Endothelial cell of umbilical vein (primary cell): ENCODE measurements at regions of chr21 and their contacts with region 1.

Region 1: DNA sequence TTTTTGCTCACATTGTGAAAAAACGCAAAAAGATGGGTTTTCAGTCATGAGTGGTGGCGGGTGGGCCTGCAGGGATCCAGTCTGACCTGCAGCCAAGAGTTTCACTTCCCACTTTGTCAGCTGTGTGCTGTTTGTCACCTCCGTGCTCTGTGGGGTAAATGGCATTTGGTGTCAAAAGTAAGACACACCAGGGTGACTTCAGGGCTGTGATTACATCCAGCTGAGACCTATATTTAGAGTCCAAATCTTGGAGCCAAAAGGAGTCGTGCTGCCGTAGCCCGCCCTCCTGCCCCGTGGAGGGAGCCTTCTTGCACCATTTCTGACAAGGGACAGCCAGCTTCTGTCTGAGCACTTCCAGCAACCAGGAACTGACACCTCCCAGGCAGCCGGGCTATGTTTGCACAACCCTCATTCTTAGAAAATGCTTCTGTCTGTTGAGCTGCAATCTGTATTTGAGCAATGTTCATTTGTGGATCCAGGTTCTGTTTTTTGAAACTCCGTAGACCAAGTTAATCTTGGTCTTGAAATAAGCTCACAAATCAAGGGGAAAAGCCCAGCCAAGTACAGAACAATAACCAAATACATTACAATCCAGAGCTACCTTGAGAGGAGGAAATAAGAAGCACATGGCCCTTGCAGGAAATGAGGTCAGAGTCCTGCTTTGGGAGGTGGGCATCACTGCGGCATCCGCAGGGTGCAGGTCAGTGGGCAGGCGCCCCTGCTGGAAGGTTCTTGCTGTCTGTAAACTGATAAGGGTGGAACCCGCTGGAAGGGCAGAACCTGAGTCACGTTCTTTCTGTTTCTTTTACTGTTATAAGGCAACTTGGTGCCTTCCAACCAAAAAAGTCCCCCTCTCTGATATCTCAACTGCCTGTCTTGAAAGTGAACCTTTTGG is 14.4 kb downstream of the ABCG1 start:
- DNase-seq: peak; percentile 86
- H3K4me3 ChIP-seq: no peak overlapping the region
- H3K27ac ChIP-seq: peak overlapping the region; percentile 74
- H3K4me1 ChIP-seq: peaks cover 32% of the 10 kb centered on the region
- H3K27me3 ChIP-seq: peaks cover 0 to 5% of the 10 kb centered on the region in 2 experiments
- CTCF ChIP-seq: peak; percentile 37 to 39
- POLR2A ChIP-seq: no peak

Region 2: GRCh38 chr21:42156690-42157577 is 76.4 kb before region 1 on chr21:
- CTCF ChIA-PET with region 1: no interaction called
- POLR2A ChIA-PET with region 1: no interaction called
- dilution Hi-C with region 1: no loop called
- intact Hi-C with region 1: no loop called
- DNase-seq: peak; percentile 38
- H3K4me3 ChIP-seq: no peak overlapping the region
- H3K27ac ChIP-seq: no peak overlapping the region
- H3K4me1 ChIP-seq: no peaks in the 10 kb centered on the region
- H3K27me3 ChIP-seq: peaks cover 2% of the 10 kb centered on the region in 2 experiments
- CTCF ChIP-seq: no peak
- POLR2A ChIP-seq: no peak

Region 3: DNA sequence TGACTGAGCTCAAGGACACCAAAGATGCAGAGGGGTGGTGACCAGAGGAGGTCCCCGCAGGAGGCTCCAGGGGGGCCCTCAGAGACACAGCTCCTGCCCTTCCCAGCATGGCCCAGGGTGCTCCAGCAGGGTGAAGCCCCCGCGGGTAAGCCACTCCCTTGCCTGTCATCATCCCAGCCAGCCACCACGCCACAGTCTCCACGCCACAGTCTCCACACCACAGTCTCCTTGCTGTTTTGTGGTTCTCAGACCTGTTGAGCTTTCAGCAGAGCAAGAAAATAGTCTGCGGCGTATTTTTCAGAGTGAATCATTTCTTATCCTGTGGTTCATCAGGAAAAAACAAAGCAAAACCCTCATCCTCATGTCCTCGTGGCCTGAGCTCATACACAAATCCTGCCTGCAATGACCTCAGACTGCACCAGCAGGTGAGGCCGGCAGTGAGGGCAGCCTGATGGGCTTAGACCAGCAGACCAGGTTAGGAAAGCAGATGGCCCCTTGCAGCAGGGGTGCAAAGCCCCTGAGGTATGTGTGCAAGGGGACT is 40.1 kb before region 1 on chr21:
- CTCF ChIA-PET with region 1: interaction called, 3 read pairs
- POLR2A ChIA-PET with region 1: no interaction called
- dilution Hi-C with region 1: no loop called
- intact Hi-C with region 1: loop called (anchors 1 kb)
- DNase-seq: peak; percentile 27
- H3K4me3 ChIP-seq: no peak overlapping the region
- H3K27ac ChIP-seq: no peak overlapping the region
- H3K4me1 ChIP-seq: peaks cover 8% of the 10 kb centered on the region
- H3K27me3 ChIP-seq: peaks cover 0 to 5% of the 10 kb centered on the region in 2 experiments
- CTCF ChIP-seq: no peak
- POLR2A ChIP-seq: no peak

Region 4: DNA sequence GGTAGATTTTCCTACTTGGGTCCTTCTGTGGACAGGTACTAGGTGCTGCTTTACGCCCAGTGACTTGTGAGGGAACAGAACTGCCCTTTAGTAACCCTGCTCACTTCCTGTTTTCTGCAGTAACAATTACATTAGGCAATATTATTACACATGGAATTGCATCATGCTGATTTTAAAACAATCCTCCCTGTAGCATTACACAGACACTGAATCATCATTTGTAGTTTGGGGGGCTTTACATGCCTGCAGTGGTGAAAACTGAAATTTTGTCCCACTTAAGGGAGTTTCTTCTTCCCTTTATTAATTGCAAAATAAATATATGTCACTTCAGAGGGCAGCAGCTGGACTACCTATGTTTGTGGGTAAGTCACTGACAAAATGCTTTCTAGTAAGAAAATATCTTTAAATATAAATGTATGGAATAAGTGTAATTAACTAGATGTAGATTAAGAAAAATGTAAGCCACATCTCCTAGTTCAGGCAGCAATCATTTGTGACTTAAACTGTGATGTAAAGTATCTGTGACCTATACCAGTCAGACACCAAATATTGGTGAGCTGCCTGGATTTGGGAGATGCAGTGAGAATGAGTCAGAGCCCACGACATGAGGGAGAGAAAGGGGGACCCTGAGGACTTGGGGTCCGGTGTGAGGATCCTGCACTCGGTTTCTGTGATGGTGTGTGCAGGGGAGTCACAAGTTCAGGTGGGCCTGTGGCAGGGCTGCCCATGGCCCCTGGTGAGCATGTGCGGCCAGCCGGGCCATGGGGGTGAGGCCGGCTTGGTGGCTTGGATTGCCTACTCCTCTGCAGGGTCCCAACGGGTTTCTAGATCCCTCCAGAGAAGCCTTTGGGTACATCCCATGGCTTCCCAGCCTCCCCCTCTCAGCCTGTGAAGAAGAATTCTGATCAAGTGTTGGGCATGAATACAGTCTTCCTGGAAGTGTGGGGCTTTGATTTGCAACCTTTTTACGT is 33.5 kb before region 1 on chr21:
- CTCF ChIA-PET with region 1: interaction called, 3 read pairs
- POLR2A ChIA-PET with region 1: no interaction called
- dilution Hi-C with region 1: no loop called
- intact Hi-C with region 1: loop called (anchors 1 kb)
- DNase-seq: peak; percentile 82
- H3K4me3 ChIP-seq: no peak overlapping the region
- H3K27ac ChIP-seq: peak overlapping the region; percentile 59
- H3K4me1 ChIP-seq: peaks cover 18% of the 10 kb centered on the region
- H3K27me3 ChIP-seq: no peaks in the 10 kb centered on the region
- CTCF ChIP-seq: no peak
- POLR2A ChIP-seq: no peak

Region 5: DNA sequence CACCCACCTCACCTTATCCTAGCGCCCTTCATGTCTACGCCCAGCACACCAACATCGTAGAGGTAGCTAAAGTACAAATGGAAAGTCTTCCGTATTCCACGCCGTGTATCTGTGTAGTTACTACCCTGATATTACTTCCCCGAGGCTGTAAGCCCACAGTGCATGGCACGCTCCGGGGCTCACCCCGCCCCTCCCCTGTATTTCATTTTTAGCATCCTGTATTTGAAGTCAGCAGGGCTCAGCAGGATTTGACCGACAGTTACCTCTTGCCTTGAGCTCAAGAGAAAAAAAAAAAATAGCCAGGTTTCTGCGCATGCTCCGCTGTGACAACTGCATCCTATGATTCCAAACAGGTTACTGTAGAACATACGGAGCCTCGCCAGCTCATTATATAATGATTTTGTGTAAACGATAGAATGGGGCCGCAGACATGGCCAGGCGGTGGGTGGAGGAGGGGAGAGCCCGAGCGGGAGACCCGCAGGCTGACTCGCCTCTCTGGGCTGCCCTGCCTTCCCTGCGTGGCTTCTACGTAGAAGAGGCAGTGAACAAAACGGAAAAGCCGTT is 13.1 kb before region 1 on chr21:
- CTCF ChIA-PET with region 1: interaction called, 29 read pairs
- POLR2A ChIA-PET with region 1: interaction called, 5 read pairs
- dilution Hi-C with region 1: no loop called
- intact Hi-C with region 1: loop called (anchors 1 kb)
- DNase-seq: peak; percentile 91
- H3K4me3 ChIP-seq: peak overlapping the region; percentile 53 to 65 (median 63)
- H3K27ac ChIP-seq: peak overlapping the region; percentile 53
- H3K4me1 ChIP-seq: peaks cover 24% of the 10 kb centered on the region
- H3K27me3 ChIP-seq: peaks cover 2 to 6% of the 10 kb centered on the region in 2 experiments
- CTCF ChIP-seq: no peak
- POLR2A ChIP-seq: no peak

Region 6: DNA sequence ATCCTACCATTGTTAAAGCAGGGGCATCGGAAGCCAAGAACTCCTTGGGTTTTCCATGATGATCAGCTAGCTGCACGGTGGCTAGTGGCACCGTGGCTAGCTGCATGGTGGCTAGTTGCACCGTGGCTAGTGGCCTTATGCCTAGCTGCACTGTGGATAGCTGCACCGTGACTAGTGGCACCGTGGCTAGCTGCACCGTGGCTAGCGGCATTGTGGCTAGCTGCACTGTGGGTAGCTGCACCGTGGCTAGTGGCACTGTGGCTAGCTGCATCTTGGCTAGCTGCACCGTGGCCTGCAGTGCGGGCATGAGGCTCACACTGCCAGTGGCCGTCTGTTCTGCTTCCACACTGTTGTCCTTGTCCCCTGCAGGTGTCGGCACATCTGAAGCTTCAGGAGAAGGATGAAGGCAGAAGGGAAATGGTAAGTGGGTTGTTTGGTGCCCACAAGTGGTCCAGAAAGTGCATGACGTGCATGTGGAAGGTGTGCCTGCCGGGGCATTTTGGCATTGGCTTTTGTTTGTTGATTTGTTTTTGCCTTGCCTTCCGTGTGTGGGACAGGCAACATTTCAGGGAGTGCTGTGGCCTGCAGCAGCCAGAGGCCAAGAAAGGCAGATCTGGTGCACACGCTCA is 43.3 kb after region 1 on chr21:
- CTCF ChIA-PET with region 1: interaction called, 5 read pairs
- POLR2A ChIA-PET with region 1: no interaction called
- dilution Hi-C with region 1: no loop called
- intact Hi-C with region 1: loop called (anchors 1 kb)
- DNase-seq: no peak
- H3K4me3 ChIP-seq: no peak overlapping the region
- H3K27ac ChIP-seq: no peak overlapping the region
- H3K4me1 ChIP-seq: peaks cover 12% of the 10 kb centered on the region
- H3K27me3 ChIP-seq: no peaks in the 10 kb centered on the region
- CTCF ChIP-seq: peak in 1 of 2 donors; percentile 17
- POLR2A ChIP-seq: no peak